Activated CD8-positive, alpha-beta T cell treated with anti-CD3 and anti-CD28 coated beads, Interleukin-2, amount 10 ng/mL, durations not matched to agents 7 days and 5 days (primary cell): ENCODE measurements at regions of chrX and their contacts with region 1.

Region 1: DNA sequence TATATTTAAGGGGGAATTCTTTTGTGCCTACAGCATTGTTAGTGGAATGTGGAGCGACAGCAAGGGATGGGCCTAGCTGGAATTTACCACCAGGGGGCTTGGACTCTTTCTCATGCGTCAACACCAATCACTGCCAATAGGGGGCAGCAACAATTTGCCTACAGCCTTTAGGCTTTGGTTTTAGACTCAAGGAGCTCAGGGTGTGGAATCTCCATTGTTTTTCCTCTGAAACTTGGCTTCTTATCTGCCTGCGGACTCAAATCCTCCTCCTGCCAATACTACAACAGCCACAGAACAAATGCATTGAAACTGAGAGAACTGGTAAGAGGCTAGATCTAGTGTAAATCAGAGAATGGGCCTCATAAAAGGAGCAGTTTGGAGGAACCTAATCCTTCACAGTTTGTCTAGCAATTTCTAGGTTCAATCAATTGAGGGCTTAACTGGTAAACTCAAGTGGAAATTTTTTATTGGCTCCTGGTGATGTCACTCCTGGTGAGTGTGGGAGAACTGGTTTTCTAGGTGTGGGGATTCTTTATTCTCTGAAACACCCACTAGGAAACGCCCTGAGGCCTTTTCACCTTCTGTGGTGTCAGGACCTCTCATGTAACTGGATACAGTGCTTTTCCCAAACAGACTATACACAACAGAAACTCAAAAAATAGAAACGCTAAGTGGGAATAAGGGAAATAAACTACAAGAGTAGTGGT is 27.9 kb upstream of the TMSB4X start:
- DNase-seq: peak; percentile 81
- ATAC-seq: peak; percentile 23
- H3K4me3 Mint-ChIP-seq: peak overlapping the region; percentile 69
- H3K27ac Mint-ChIP-seq: peak overlapping the region; percentile 93
- H3K4me1 Mint-ChIP-seq: peaks cover 48% of the 10 kb centered on the region
- H3K27me3 Mint-ChIP-seq: no peaks in the 10 kb centered on the region

Region 2: DNA sequence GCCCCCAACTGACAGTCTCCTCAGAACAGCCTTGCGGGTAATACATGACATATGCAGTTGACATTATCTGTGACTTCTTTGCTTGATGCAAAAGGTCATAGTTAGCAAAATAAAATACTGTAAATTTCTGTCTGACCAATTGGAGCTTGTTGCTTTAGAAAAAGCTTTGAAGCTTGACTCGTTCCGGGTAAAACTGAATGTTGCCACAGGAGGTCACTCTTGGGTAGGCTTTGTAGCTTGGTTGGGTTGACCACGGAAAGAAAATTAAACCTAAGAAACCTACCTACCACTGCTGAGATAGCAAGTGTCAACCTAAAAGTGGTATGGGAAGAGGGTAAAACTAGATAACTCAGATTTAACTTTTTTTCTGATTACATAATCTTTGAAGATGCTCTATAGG is 132.6 kb before region 1 on chrX:
- CTCF ChIA-PET with region 1: interaction called, 10 read pairs
- POLR2A ChIA-PET with region 1: no interaction called
- DNase-seq: peak; percentile 68
- ATAC-seq: peak; percentile 47
- H3K4me3 Mint-ChIP-seq: no peak overlapping the region
- H3K27ac Mint-ChIP-seq: no peak overlapping the region
- H3K4me1 Mint-ChIP-seq: peaks cover 34% of the 10 kb centered on the region
- H3K27me3 Mint-ChIP-seq: no peaks in the 10 kb centered on the region

Region 3: DNA sequence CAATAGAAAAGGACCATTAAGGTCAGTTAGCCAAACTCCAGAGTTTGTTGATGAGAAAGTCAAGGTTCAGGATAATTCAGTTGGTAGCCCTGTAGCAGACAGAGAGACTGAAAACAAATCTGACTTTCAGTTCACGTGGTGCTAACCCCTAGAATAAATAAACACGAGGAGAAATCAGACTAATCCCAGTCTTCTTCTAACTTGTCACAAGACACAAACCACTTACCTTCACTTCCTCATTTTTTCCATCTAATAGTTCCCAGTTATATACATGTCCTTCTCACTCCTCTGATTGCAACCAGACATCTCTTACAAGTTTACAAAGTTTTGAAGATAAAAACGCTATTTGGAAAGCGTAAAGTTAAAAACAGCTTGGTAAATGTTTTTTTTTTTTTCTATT is 72.4 kb before region 1 on chrX:
- CTCF ChIA-PET with region 1: no interaction called
- POLR2A ChIA-PET with region 1: no interaction called
- DNase-seq: no peak
- ATAC-seq: no peak
- H3K4me3 Mint-ChIP-seq: no peak overlapping the region
- H3K27ac Mint-ChIP-seq: no peak overlapping the region
- H3K4me1 Mint-ChIP-seq: no peaks in the 10 kb centered on the region
- H3K27me3 Mint-ChIP-seq: no peaks in the 10 kb centered on the region

Region 4: DNA sequence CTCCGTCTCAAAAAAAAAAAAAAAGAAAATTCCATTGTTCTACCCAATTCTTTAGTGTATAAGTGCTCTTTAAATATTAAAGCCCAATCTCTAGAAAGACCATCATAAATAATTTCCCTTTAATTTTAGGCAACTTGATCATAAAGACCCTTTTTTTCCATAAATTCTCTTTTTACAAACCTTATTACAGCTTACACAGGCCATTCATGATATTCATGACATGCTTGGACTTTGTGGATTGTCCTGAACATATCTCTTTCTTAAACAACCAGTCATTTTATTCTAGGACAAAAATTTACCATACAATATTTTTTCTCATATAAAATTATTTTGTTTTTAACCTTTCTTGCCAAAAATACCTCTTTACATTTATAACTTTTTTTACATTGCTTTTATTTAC is 10.0 kb before region 1 on chrX:
- CTCF ChIA-PET with region 1: interaction called, 18 read pairs
- POLR2A ChIA-PET with region 1: interaction called, 3 read pairs
- DNase-seq: no peak
- ATAC-seq: no peak
- H3K4me3 Mint-ChIP-seq: no peak overlapping the region
- H3K27ac Mint-ChIP-seq: no peak overlapping the region
- H3K4me1 Mint-ChIP-seq: no peaks in the 10 kb centered on the region
- H3K27me3 Mint-ChIP-seq: no peaks in the 10 kb centered on the region

Region 5: GRCh38 chrX:13000301-13000811 is 53.4 kb after region 1 on chrX:
- CTCF ChIA-PET with region 1: interaction called, 31 read pairs
- POLR2A ChIA-PET with region 1: interaction called, 8 read pairs
- DNase-seq: peak; percentile 58
- ATAC-seq: peak; percentile 59
- H3K4me3 Mint-ChIP-seq: peak overlapping the region; percentile 68
- H3K27ac Mint-ChIP-seq: peak overlapping the region; percentile 96
- H3K4me1 Mint-ChIP-seq: peaks cover 66% of the 10 kb centered on the region
- H3K27me3 Mint-ChIP-seq: no peaks in the 10 kb centered on the region

Region 6: DNA sequence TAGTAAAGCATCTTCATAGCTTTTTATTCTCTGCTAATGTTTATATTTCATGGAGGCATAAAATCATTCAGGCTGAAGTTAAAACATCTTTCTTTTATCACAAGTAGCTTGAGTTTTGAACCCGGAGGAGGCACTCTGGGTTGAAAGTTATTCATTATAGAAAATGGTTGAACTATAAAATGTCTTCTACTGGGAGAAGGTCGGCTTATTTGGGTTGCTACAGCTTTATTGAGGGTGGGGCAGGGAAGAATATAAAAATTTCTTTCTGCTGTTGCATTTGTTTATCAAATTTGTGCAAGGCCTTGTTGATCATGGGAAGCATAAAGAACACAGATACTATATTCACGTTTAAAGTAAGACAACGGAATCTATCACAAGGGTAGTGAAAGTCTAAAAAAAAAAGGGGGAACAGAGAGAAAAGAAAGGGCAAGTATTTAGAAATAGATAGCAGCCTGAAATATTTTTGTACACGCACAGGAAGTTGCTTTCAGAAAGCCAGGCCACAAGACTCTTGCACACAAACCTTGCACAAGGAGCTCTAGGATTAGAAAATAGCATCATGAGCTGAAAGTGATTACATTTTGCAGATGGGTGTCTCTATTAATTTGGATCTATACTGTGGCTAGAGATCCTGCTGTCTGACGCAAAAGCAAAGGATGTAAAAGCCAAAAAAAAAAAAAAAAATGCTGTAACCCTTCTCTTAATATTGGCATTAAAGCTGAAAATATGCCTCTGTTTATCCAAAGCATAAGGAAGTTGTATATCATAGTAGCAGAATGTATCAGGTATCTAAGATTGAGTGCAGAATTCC is 134.6 kb after region 1 on chrX:
- CTCF ChIA-PET with region 1: interaction called, 37 read pairs
- POLR2A ChIA-PET with region 1: interaction called, 55 read pairs
- DNase-seq: no peak
- ATAC-seq: peak; percentile 27
- H3K4me3 Mint-ChIP-seq: peak overlapping the region; percentile 63
- H3K27ac Mint-ChIP-seq: peak overlapping the region; percentile 95
- H3K4me1 Mint-ChIP-seq: peaks cover 90% of the 10 kb centered on the region
- H3K27me3 Mint-ChIP-seq: no peaks in the 10 kb centered on the region

Region 7: GRCh38 chrX:13473442-13474163 is 526.6 kb after region 1 on chrX:
- CTCF ChIA-PET with region 1: interaction called, 15 read pairs
- POLR2A ChIA-PET with region 1: no interaction called
- DNase-seq: peak; percentile 23
- ATAC-seq: peak; percentile 60
- H3K4me3 Mint-ChIP-seq: peak overlapping the region; percentile 60
- H3K27ac Mint-ChIP-seq: peak overlapping the region; percentile 80
- H3K4me1 Mint-ChIP-seq: peaks cover 25% of the 10 kb centered on the region
- H3K27me3 Mint-ChIP-seq: no peaks in the 10 kb centered on the region